ENCODE measurements at regions of chr20 and their contacts with region 1.

Region 1: DNA sequence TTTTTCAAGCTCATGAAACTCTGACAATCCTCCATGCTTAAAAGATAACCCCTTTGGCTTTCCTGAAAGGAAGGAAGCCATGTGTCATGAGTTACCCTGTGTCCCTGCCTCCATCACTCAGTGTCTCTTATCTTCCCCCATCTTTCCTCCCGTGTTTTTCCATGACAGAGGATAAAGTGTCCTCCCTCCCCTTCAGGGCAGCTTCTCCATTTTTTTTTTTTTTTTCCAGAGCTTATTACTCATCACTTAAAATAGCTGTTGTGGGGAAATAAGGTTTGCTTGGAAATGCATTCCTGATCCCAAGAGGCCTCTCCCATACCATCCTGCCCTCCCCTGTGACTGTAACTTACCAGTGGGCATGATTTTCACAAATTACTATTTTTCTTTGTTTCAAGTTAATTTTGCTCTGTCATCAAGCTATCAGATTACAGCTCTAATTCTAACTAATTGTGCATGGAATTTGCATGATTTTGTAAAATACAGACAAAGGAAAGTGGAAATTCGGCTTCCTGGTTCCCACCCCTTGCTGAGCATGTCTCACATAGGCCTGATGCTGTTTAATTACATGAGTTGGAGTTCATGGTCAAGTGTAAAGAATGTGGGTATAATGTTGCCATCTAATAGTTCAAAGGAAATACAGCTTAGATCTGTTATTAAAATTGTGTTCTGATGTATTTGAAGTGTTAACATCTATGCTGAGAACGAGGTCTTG is 614.5 kb upstream of the FLRT3 start:
- DNase-seq: no peak
- H3K4me3 Mint-ChIP-seq: no peak overlapping the region
- H3K27ac Mint-ChIP-seq: no peak overlapping the region
- H3K4me1 Mint-ChIP-seq: no peaks in the 10 kb centered on the region
- H3K27me3 Mint-ChIP-seq: no peaks in the 10 kb centered on the region

Region 2: GRCh38 chr20:14860410-14860814 is 91.5 kb before region 1 on chr20:
- intact Hi-C with region 1: loop called (anchors 10 kb)
- DNase-seq: peak; percentile 51
- H3K4me3 Mint-ChIP-seq: no peak overlapping the region
- H3K27ac Mint-ChIP-seq: no peak overlapping the region
- H3K4me1 Mint-ChIP-seq: no peaks in the 10 kb centered on the region
- H3K27me3 Mint-ChIP-seq: no peaks in the 10 kb centered on the region

Region 3: DNA sequence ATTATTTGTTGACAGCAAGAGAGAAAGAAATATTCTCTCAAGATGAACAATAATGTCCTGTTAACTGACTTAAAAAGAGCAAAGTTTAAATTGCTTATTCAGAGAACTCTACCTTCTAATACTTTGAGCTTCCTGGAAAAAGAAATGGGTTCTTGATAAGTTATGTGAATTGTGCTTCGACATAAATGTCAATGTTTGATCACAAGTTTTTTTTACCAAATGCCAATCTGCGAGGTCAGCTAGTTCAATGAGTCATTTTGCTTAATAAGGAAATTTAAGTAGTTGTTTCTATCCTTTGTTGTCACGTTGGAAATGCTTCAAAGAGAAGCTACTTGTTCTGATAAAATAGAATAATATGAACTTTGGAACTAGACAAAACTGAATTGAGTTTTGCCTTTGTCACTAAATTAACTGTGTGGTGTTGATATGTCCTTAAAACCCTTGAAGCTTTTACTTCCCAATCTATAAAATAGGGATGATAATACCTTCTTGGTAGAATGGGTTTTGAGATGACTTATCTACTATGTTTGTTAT is 27.7 kb after region 1 on chr20:
- intact Hi-C with region 1: no loop called
- DNase-seq: no peak
- H3K4me3 Mint-ChIP-seq: no peak overlapping the region
- H3K27ac Mint-ChIP-seq: no peak overlapping the region
- H3K4me1 Mint-ChIP-seq: no peaks in the 10 kb centered on the region
- H3K27me3 Mint-ChIP-seq: no peaks in the 10 kb centered on the region

Region 4: DNA sequence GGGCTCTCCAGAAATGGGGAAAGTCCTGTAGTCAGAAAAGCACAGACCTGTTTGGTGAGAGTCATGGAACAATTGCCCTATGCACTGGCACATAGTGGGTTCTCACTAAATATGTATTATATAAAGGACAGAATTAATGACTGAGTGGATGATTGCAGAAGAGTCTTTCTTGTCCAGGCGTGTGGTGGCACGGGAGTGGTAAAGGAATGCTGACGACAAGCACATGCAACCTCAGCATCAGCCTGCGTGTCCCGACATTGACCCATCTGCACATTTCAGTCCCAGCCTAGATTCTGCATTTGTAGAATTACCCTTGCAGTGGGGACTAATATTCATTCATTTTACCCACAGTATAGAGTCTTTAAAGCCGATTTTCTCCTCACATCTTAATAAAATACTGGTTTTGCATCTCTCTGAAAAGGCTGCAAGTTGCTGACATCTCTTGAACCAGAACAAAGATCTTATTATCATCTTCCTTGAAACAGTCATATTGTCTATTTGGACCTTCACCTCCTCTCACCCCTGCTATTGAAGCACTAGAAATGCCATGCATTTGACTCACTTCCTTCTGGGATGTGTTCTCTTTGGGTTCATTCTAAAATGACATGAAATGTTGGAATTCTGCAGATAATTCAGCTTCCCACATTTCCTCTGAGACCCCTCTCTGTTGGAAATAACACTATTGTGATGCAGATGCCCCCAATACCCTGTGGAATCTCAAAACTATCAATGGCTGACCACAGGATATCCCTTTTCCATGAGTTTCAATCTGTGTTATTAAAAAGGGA is 269.1 kb after region 1 on chr20:
- intact Hi-C with region 1: no loop called
- DNase-seq: no peak
- H3K4me3 Mint-ChIP-seq: no peak overlapping the region
- H3K27ac Mint-ChIP-seq: no peak overlapping the region
- H3K4me1 Mint-ChIP-seq: no peaks in the 10 kb centered on the region
- H3K27me3 Mint-ChIP-seq: no peaks in the 10 kb centered on the region

Measured in activated CD4-positive, alpha-beta T cell treated with anti-CD3 and anti-CD28 coated beads, Interleukin-2, amount 10 ng/mL, durations not matched to agents 24 days and 14 days (primary cell).